Activated CD4-positive, alpha-beta T cell treated with anti-CD3 and anti-CD28 coated beads for 36 hours (primary cell): ENCODE measurements at regions of chr6 and their contacts with region 1.

Region 1: GRCh38 chr6:136792410-136793262 is at the start of gene MAP3K5:
- DNase-seq: peak; percentile 97
- ATAC-seq: peak; percentile 79
- H3K4me3 Mint-ChIP-seq: peak within 1 kb of the TSS; percentile 90
- H3K27ac Mint-ChIP-seq: peak within 1 kb of the TSS; percentile 93
- H3K4me1 Mint-ChIP-seq: peaks cover 35% of the 10 kb centered on the region
- H3K27me3 Mint-ChIP-seq: no peaks in the 10 kb centered on the region
- total RNA-seq, gene MAP3K5: 6.7 to 7.3 TPM

Region 2: GRCh38 chr6:136550330-136551071 is 242.1 kb before region 1 on chr6 and contains the start of gene MAP7:
- CTCF ChIA-PET with region 1: interaction called, 6 read pairs
- POLR2A ChIA-PET with region 1: no interaction called
- intact Hi-C with region 1: loop called in 1 of 2 experiments (anchors 1 kb)
- DNase-seq: peak; percentile 84
- ATAC-seq: peak; percentile 96
- H3K4me3 Mint-ChIP-seq: peak within 1 kb of the TSS; percentile 54
- H3K27ac Mint-ChIP-seq: no peak within 1 kb of the TSS
- H3K4me1 Mint-ChIP-seq: peaks cover 4% of the 10 kb centered on the region
- H3K27me3 Mint-ChIP-seq: peaks cover 35% of the 10 kb centered on the region
- total RNA-seq, gene MAP7: 2.1 to 3.1 TPM

Region 3: DNA sequence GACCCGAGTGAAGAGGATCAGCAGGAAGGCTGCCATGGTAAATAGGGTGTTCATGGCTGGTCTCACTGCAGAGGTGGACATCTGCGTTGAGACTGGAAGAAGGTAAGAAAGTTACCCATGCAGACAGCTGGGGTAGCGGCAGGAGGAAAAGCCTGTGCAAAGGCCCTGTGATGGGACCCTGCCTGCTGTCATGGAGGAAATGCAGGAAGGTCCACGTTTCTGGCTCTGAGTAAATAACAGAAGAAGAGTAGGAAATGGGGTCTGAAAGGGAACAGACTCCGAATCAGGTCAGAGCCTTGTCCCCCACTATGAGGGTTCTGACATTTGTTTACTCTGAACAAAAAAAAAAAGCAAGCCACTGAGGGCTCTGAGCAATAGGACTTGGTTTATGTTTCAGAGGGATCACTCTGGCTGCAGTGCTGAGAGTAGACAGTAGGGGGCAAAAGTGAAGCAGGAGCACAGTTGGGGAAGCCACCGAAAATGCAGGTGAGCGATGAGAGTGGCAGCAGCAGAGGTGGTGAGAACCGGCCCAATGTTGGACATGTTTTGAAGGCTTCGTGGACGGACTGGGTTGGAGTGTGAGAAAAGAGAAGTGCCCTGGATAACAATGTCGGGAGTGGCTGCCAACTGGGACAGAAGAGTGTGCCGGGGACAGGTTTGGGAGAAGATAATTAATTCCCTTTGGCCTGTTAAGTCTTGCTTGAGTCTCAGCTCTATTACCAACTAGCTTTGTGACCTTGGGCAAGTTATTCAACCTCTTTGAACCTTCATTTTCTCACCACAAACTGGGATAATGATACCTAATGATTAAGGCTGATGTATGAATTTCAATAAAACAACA is 184.5 kb before region 1 on chr6:
- CTCF ChIA-PET with region 1: interaction called, 12 read pairs
- POLR2A ChIA-PET with region 1: no interaction called
- intact Hi-C with region 1: loop called (anchors 1 kb)
- DNase-seq: peak; percentile 91
- ATAC-seq: peak; percentile 94
- H3K4me3 Mint-ChIP-seq: no peak overlapping the region
- H3K27ac Mint-ChIP-seq: no peak overlapping the region
- H3K4me1 Mint-ChIP-seq: peaks cover 13% of the 10 kb centered on the region
- H3K27me3 Mint-ChIP-seq: no peaks in the 10 kb centered on the region

Region 4: DNA sequence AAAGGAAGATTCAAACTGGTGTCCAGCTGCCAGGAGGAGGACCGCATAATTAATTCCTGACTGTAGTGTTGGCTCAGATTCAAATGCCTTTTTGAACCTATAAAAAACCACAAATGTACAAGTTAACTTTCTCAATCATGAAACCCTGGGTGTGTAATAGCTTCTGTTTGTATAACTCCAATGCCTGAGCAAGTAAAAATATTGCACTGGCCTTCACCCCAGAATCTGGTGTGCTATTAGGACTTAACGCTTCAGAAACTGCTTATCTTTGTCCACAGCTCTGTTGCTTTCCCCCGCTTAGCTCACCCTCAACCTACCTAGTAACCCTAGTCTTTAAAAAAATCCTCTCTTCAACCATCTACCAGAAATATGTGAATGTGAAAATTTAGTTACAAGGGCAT is 123.3 kb before region 1 on chr6:
- CTCF ChIA-PET with region 1: interaction called, 12 read pairs
- POLR2A ChIA-PET with region 1: no interaction called
- intact Hi-C with region 1: no loop called
- DNase-seq: no peak
- ATAC-seq: no peak
- H3K4me3 Mint-ChIP-seq: no peak overlapping the region
- H3K27ac Mint-ChIP-seq: no peak overlapping the region
- H3K4me1 Mint-ChIP-seq: no peaks in the 10 kb centered on the region
- H3K27me3 Mint-ChIP-seq: no peaks in the 10 kb centered on the region

Region 5: DNA sequence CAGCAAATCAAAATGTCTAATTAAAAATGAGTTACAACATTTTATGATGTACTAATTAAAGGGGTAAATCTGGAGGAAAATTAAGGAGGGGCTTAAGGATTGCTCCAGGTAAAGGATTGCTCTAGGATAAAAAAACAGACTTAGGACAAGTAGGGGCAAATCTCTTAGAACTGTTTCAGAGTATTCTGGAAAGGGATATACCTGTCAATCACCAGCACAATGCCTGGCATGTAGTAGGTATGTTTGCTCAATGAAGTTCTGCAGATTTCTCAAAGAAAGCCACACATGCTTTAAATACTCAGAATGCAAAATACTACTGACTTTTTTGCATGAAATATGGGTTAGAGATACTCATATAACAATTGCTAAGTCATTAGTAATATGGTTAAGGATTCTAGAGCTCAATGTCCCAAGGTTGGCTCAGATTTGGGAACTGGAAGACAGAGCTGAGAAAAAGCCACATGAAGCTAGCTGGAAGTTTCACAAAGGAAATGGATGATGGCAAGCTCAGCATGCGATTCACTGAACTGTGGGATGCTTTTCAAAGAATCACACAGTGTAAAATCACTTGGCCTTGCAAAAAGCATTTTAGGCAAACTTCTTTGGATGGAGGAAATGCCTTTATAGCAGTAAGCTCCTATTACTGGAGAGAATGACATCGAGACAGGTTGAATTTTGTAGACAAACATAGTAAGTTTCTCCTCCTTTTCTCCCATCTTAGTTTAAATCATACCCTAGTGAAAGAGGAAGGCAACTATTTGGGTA is 73.2 kb before region 1 on chr6:
- CTCF ChIA-PET with region 1: interaction called, 11 read pairs
- POLR2A ChIA-PET with region 1: interaction called, 3 read pairs
- intact Hi-C with region 1: no loop called
- DNase-seq: no peak
- ATAC-seq: peak; percentile 66
- H3K4me3 Mint-ChIP-seq: no peak overlapping the region
- H3K27ac Mint-ChIP-seq: peak overlapping the region; percentile 9
- H3K4me1 Mint-ChIP-seq: peaks cover 37% of the 10 kb centered on the region
- H3K27me3 Mint-ChIP-seq: no peaks in the 10 kb centered on the region

Region 6: GRCh38 chr6:136761227-136761922 is 31.3 kb before region 1 on chr6:
- CTCF ChIA-PET with region 1: interaction called, 53 read pairs
- POLR2A ChIA-PET with region 1: no interaction called
- intact Hi-C with region 1: no loop called
- DNase-seq: peak; percentile 22
- ATAC-seq: peak; percentile 28
- H3K4me3 Mint-ChIP-seq: peak overlapping the region; percentile 18
- H3K27ac Mint-ChIP-seq: peak overlapping the region; percentile 35
- H3K4me1 Mint-ChIP-seq: peaks cover 61% of the 10 kb centered on the region
- H3K27me3 Mint-ChIP-seq: no peaks in the 10 kb centered on the region